ENCODE measurements at regions of chr11 and their contacts with region 1.

Region 1: GRCh38 chr11:58451585-58451984 is 9.5 kb upstream of the OR5B12 start:
- DNase-seq: no peak
- ATAC-seq: no peak
- H3K4me3 ChIP-seq: no peak overlapping the region
- H3K27ac ChIP-seq: no peak overlapping the region
- H3K4me1 ChIP-seq: no peaks in the 10 kb centered on the region
- H3K27me3 ChIP-seq: no peaks in the 10 kb centered on the region
- CTCF ChIP-seq: no peak

Region 2: DNA sequence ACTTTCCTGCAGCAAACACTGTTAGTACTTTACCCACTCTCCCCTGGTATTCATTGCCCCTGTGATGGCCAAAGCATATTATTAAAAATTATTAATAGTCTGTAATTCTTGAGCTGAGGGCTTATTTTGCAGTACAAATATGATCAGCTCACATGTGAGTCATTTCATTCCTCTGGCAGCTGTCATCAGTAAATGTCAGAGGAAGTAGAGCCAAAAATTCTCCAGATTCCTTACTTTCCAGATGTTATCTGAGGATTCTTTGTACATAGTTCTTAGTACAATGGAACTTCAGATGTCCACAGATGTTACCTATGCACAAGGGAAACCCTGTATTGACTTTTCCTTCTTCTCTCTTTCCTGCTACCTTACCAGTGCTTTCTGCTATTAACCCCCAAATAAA is 57.4 kb before region 1 on chr11:
- intact Hi-C with region 1: loop called in 1 of 10 experiments (anchors 10 kb)
- DNase-seq: no peak
- ATAC-seq: peak in 1 of 8 donors; percentile 51
- H3K4me3 ChIP-seq: no peak overlapping the region
- H3K27ac ChIP-seq: no peak overlapping the region
- H3K4me1 ChIP-seq: peaks cover 0 to 11% (median 0%) of the 10 kb centered on the region in 9 donors
- H3K27me3 ChIP-seq: no peaks in the 10 kb centered on the region
- CTCF ChIP-seq: no peak

Measured in heart right ventricle (tissue), 16 donors.